ENCODE measurements at regions of chr6 and their contacts with region 1.

Region 1: DNA sequence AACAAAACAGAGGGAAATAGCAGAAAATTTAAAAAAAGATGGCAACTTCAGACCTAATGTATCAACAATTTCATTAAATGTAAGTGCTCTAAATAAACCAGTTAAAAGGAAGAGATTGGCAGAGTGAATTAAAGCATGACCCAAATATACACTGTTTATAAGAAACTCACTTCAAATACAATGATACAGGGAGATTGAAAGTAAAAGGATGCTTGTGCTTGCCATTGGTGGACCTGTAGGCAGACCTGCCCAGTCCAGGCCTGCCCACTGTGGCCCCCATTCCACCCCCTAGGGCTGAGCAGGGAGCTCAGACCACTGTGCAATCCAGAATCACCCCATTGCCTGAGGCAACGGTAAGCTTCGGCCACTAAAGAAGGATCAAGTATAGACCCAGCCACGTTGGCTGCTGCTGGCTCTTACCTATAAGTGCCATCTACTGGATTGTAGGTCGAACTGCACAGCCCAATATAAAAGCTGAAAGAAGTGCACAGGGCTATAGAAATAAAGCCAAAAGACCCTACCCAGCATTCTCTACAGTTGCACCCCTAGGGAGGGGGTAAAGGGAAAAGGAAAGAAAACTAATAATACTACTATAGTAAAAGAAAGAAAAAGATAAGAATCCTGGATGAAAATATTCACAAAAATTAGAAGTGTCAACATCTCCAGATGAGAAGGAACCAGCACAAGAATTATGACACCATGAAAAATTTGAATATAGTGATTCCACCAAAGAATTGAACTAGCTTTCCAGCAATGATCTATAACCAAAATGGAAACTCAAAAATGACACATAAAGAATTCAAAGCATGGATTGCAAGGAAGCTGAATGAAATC is 36.1 kb downstream of the PSMB1 start:
- DNase-seq: peak; percentile 65
- H3K4me3 Mint-ChIP-seq: no peak overlapping the region
- H3K27ac Mint-ChIP-seq: no peak overlapping the region
- H3K4me1 Mint-ChIP-seq: peaks cover 4% of the 10 kb centered on the region
- H3K27me3 Mint-ChIP-seq: peaks cover 35% of the 10 kb centered on the region
- CTCF ChIP-seq: peak; percentile 67

Region 2: DNA sequence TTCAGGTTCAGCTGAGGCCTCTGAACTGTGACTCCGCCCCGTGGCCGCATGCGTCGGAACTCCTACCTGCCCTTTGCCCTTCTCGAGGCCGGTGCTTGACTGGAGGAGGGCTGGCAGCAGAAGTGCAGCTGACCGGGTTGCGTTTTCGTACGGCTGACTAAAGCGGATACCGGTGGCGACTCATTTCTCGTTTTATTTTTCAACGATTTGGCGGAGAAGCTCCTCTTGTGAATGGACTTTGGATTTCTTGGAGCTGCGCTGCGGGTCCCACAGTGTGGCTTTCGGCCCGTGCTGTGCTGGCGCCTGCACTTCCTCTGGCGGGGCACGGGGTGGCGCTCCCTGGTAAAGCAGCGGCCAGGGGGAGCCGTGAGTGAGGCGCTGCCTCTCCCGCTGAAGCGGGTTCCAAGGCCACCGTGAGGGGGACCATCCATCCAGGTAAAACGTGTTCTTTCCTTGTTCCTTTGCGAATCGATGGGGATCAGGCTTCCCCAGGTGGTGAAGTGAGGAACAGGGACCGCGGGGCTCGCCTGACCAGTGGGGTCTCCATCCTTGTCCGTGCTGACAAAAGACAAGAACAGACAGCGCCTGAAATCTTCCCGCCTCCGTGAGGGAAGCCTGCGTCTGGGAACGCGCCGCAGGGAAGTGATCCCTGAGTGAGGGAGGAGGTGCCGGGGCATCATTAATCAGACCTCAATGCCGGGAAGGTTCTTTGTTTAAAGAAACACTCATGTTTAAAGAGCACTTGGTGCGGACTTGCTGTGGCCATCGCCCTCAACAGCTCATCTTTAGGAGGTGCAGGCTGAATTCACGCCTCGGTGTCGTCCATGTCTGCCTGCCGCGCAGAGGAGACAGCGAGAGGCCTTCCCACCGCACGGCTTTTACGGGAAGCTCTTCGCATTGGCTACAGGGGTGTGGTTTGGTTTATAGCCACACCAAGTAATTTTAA is 726.7 kb before region 1 on chr6:
- CTCF ChIA-PET with region 1: interaction called, 31 read pairs
- POLR2A ChIA-PET with region 1: no interaction called
- intact Hi-C with region 1: loop called (anchors 1 kb)
- DNase-seq: peak; percentile 68
- H3K4me3 Mint-ChIP-seq: peak overlapping the region; percentile 70
- H3K27ac Mint-ChIP-seq: no peak overlapping the region
- H3K4me1 Mint-ChIP-seq: peaks cover 5% of the 10 kb centered on the region
- H3K27me3 Mint-ChIP-seq: peaks cover 14% of the 10 kb centered on the region
- CTCF ChIP-seq: peak; percentile 90

Region 3: DNA sequence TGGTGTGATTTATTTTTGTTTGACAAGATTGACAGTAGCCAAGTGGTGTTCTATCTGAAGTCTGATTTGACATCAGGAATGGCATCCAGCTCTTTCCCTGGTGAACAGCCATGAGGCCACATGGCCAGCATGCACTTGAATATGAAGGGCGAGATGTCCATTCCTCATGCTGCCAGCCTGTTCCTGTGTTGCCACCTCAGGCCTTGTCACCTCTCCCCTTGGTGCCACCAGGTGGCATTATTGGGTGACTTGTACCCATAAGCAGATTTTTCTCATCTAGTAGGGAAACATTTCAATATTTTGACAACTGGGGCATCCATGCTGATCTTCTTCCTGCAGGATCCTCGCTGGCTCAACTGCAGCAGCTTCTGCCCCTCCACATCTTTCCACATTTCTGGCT is 566.4 kb before region 1 on chr6:
- CTCF ChIA-PET with region 1: interaction called, 3 read pairs
- POLR2A ChIA-PET with region 1: no interaction called
- intact Hi-C with region 1: loop called (anchors 5 kb)
- DNase-seq: peak; percentile 45
- H3K4me3 Mint-ChIP-seq: no peak overlapping the region
- H3K27ac Mint-ChIP-seq: no peak overlapping the region
- H3K4me1 Mint-ChIP-seq: no peaks in the 10 kb centered on the region
- H3K27me3 Mint-ChIP-seq: peaks cover 27% of the 10 kb centered on the region
- CTCF ChIP-seq: no peak

Region 4: GRCh38 chr6:170178561-170179477 is 338.2 kb before region 1 on chr6:
- CTCF ChIA-PET with region 1: no interaction called
- POLR2A ChIA-PET with region 1: no interaction called
- intact Hi-C with region 1: loop called (anchors 10 kb)
- DNase-seq: peak; percentile 97
- H3K4me3 Mint-ChIP-seq: peak overlapping the region; percentile 20
- H3K27ac Mint-ChIP-seq: peak overlapping the region; percentile 83
- H3K4me1 Mint-ChIP-seq: peaks cover 13% of the 10 kb centered on the region
- H3K27me3 Mint-ChIP-seq: peaks cover 22% of the 10 kb centered on the region
- CTCF ChIP-seq: no peak

Region 5: GRCh38 chr6:170306324-170307079 is 210.5 kb before region 1 on chr6 and contains the start of gene FAM120B:
- CTCF ChIA-PET with region 1: no interaction called
- POLR2A ChIA-PET with region 1: no interaction called
- intact Hi-C with region 1: loop called (anchors 1 kb)
- DNase-seq: peak; percentile 94
- H3K4me3 Mint-ChIP-seq: peak within 1 kb of the TSS; percentile 91
- H3K27ac Mint-ChIP-seq: peak within 1 kb of the TSS; percentile 99
- H3K4me1 Mint-ChIP-seq: peaks cover 19% of the 10 kb centered on the region
- H3K27me3 Mint-ChIP-seq: no peaks in the 10 kb centered on the region
- CTCF ChIP-seq: no peak
- total RNA-seq, gene FAM120B: 23.4 and 29.3 TPM in 2 replicates

Region 6: GRCh38 chr6:170529839-170530469 is 13.0 kb after region 1 on chr6:
- CTCF ChIA-PET with region 1: interaction called, 17 read pairs
- POLR2A ChIA-PET with region 1: no interaction called
- intact Hi-C with region 1: no loop called
- DNase-seq: peak; percentile 84
- H3K4me3 Mint-ChIP-seq: no peak overlapping the region
- H3K27ac Mint-ChIP-seq: no peak overlapping the region
- H3K4me1 Mint-ChIP-seq: no peaks in the 10 kb centered on the region
- H3K27me3 Mint-ChIP-seq: no peaks in the 10 kb centered on the region
- CTCF ChIP-seq: peak; percentile 77

Measured in MCF 10A (cell line).